Activated CD8-positive, alpha-beta T cell treated with anti-CD3 and anti-CD28 coated beads for 36 hours (primary cell): ENCODE measurements at regions of chr16 and their contacts with region 1.

Region 1: DNA sequence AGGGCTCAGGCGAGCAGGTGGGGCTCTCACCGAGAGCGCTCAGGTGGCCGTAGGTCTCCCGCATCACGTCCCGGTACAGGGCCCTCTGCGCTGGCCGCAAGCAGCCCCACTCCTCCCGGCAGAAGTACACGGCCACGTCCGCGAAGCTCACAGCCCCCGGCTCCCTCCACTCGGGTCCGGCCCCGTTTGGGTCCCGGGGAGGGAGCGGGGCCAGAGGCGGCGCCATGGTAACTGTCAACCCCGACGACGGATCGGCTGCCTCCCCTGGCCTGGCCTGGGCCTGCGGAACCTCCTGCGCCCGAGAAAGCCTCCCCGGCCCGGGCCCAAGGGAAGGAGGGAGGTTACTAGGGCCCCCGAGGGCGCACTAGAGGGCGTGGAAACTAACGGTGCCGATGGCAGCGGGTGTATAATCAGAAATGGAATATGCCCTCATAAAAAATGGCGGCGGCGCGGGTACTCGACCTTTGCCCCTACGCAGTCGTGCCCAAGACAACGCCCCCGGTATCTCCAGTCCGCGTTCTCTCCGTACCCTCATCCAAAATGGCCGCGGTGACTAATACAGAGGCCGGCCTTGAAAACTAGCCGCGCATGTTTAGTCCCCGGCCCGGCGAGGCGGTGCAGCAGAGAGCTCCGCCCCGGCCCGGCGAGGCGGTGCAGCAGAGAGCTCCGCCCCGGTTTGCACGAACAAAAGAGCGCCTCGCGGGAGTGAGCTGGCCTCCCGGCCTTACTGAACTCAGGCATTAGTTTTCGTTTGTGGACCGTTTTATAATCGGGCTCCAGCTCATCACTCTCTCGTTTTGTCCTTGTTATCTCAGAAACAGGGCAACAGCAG is at the start of gene ZNF764:
- DNase-seq: peak; percentile 99
- ATAC-seq: peak; percentile 96
- H3K4me3 Mint-ChIP-seq: peak within 1 kb of the TSS; percentile 88
- H3K27ac Mint-ChIP-seq: peak within 1 kb of the TSS; percentile 94
- H3K4me1 Mint-ChIP-seq: peaks cover 41% of the 10 kb centered on the region
- H3K27me3 Mint-ChIP-seq: no peaks in the 10 kb centered on the region
- CTCF ChIP-seq: no peak
- total RNA-seq, gene ZNF764: 9.7 to 10.4 TPM

Region 2: DNA sequence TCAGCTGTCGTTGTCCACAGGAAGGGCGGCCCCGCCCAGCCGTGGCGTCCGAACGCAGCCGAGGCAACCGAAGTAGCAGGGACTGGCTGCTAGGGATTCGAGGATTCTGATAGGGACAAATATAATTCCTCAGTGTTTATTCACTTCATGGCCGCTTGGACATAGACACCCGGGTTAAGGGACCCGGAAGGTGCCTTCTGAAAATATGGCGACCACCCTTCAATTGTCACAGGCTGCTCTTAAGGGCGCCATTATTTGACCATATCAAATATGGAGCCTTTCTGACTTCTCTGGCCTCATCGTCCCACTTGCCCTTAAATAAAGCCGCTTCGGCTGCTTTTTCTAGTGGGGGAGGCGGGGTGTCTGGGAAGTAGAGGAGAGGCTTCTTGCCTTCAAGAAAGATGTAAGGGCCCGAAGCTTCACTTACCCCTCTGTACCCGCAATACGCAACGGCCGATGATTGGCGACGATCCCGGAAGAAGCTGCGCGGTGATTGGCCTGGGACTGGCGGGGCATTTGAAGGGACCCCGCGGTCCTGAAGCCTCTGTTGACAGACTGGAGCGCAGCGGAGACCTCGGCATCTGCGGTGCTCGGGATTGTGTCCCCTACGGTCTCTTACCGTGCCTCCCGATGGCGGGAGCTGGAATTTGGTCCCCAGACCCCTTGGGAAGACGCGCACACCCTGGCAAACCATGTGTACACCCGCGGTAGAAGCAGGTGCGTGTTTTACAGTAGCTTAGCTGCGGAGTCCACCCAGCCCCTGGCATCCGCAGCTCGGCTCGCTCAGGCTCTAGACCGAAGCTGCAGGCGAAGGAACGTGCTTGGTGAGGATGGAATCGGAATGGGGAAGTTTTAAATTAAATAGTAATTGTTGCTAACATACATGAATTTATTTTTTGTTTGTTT is 13.8 kb after region 1 on chr16 and contains the start of gene ZNF688:
- CTCF ChIA-PET with region 1: interaction called, 16 read pairs
- POLR2A ChIA-PET with region 1: interaction called, 27 read pairs
- intact Hi-C with region 1: no loop called
- DNase-seq: peak; percentile 96
- ATAC-seq: peak; percentile 81
- H3K4me3 Mint-ChIP-seq: peak within 1 kb of the TSS; percentile 92
- H3K27ac Mint-ChIP-seq: peak within 1 kb of the TSS; percentile 93
- H3K4me1 Mint-ChIP-seq: peaks cover 41% of the 10 kb centered on the region
- H3K27me3 Mint-ChIP-seq: no peaks in the 10 kb centered on the region
- CTCF ChIP-seq: no peak
- total RNA-seq, gene ZNF688: 4.7 to 5.5 TPM

Region 3: DNA sequence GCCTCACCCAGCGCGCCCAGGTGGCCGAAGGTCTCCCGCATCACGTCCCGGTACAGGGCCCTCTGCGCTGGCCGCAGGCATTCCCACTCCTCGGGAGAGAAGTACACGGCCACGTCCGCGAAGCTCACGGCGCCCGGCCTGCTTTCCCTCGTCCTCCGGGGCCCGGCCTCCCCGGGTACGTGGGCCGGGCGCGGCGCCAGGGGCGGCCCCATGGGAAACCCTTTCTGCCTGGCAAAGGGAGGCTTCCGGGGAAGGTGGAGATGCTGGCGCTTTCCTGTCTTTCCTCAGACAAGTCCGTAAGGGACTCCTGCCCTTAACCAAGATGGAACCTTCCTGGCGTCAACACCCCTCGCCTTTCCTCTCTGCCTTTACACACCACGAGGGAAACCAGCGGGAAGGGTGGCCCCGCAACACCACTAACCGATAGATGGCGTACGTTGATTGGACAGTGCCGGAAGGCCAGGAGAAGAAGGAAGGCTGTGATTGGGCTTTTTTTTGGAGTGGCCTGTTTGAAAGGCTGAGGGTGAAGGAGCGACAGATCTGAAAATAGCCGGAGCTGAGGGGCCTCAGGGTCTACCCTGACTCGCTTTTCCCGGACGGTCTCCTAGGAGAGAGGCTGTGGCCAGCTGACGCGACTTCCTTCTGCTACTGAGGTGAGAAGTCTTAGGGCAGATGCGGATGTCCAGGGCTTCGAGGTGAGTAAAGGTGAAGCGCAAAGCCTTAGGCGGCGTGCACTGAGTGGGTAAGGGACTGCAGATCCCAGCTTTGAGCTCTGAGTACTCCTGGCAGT is 27.4 kb after region 1 on chr16 and contains the start of gene ZNF785:
- CTCF ChIA-PET with region 1: interaction called, 6 read pairs
- POLR2A ChIA-PET with region 1: interaction called, 10 read pairs
- intact Hi-C with region 1: no loop called
- DNase-seq: peak; percentile 97
- ATAC-seq: peak; percentile 98
- H3K4me3 Mint-ChIP-seq: peak within 1 kb of the TSS; percentile 91
- H3K27ac Mint-ChIP-seq: peak within 1 kb of the TSS; percentile 88
- H3K4me1 Mint-ChIP-seq: peaks cover 25% of the 10 kb centered on the region
- H3K27me3 Mint-ChIP-seq: no peaks in the 10 kb centered on the region
- CTCF ChIP-seq: no peak
- total RNA-seq, gene ZNF785: 8.8 to 10.3 TPM